Activated B cell treated with CpG ODN at 0.5 μM for 24 hours (primary cell): ENCODE measurements at regions of chr4 and their contacts with region 1.

Region 1: GRCh38 chr4:177309522-177310371 is at the start of gene NEIL3:
- DNase-seq: peak; percentile 84
- ATAC-seq: peak; percentile 96
- H3K4me3 Mint-ChIP-seq: peak within 1 kb of the TSS; percentile 94
- H3K27ac Mint-ChIP-seq: peak within 1 kb of the TSS; percentile 37
- H3K4me1 Mint-ChIP-seq: peaks cover 11% of the 10 kb centered on the region
- H3K27me3 Mint-ChIP-seq: no peaks in the 10 kb centered on the region
- CTCF ChIP-seq: no peak
- total RNA-seq, gene NEIL3: 0.15 and 0.35 TPM in 2 replicates

Region 2: DNA sequence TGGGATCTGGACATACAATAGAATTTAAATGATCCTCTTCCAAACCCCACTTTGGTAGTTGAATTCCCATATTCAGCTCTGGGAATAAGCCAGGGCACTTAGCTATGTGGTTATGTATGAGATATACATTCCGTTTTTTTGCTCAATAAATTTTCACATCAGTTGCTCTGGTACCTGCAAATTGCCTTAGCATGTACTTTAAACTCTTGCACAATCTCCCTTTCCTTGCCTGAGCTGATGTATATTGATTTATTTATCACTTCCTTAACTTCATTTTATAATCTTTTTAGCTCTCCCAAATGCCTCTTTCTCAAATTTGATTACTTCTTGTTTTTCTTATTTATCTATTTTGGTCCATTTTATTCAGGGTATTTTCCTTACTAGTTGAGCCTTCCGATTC is 222.6 kb after region 1 on chr4:
- CTCF ChIA-PET with region 1: no interaction called
- POLR2A ChIA-PET with region 1: interaction called, 10 read pairs
- intact Hi-C with region 1: no loop called
- DNase-seq: no peak
- ATAC-seq: no peak
- H3K4me3 Mint-ChIP-seq: no peak overlapping the region
- H3K27ac Mint-ChIP-seq: no peak overlapping the region
- H3K4me1 Mint-ChIP-seq: no peaks in the 10 kb centered on the region
- H3K27me3 Mint-ChIP-seq: no peaks in the 10 kb centered on the region
- CTCF ChIP-seq: no peak